ENCODE measurements at regions of chrX and their contacts with region 1.

Region 1: GRCh38 chrX:102835504-102836146 is 101.4 kb upstream of the RAB40AL start:
- DNase-seq: peak in 1 of 2 experiments; percentile 22
- H3K4me3 ChIP-seq: no peak overlapping the region
- H3K4me3 Mint-ChIP-seq: no peak overlapping the region
- H3K27ac Mint-ChIP-seq: no peak overlapping the region
- H3K4me1 ChIP-seq: no peaks in the 10 kb centered on the region
- H3K4me1 Mint-ChIP-seq: peaks cover 7% of the 10 kb centered on the region
- H3K27me3 ChIP-seq: no peaks in the 10 kb centered on the region
- H3K27me3 Mint-ChIP-seq: no peaks in the 10 kb centered on the region
- CTCF ChIP-seq: peak; percentile 44 to 55

Region 2: DNA sequence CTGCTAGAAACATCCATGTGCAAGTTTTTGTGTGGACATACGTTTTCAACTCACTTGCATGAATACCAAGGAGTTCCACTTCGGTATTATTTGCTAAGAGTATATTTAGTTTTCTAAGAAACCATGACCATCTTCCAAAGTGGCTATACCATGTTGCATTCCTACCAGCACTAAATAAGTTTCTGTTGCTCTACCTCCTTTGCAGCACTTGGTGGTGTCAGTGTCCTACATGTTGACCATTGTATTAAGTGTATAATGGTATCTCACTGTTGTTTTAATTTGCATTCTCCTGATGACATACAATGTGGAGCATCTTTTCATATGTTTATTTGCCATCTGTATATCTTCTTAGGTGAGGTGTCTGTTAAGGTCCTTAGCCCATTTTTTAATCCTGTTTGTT is 192.3 kb before region 1 on chrX:
- CTCF ChIA-PET with region 1: no interaction called
- POLR2A ChIA-PET with region 1: no interaction called
- intact Hi-C with region 1: loop called (anchors 1 kb)
- DNase-seq: no peak
- H3K4me3 ChIP-seq: no peak overlapping the region
- H3K4me3 Mint-ChIP-seq: no peak overlapping the region
- H3K27ac Mint-ChIP-seq: no peak overlapping the region
- H3K4me1 ChIP-seq: no peaks in the 10 kb centered on the region
- H3K4me1 Mint-ChIP-seq: no peaks in the 10 kb centered on the region
- H3K27me3 ChIP-seq: no peaks in the 10 kb centered on the region
- H3K27me3 Mint-ChIP-seq: no peaks in the 10 kb centered on the region
- CTCF ChIP-seq: no peak

Region 3: GRCh38 chrX:102712952-102713625 is 122.5 kb before region 1 on chrX:
- CTCF ChIA-PET with region 1: no interaction called
- POLR2A ChIA-PET with region 1: no interaction called
- intact Hi-C with region 1: loop called (anchors 1 kb)
- DNase-seq: peak; percentile 25 to 37
- H3K4me3 ChIP-seq: peak overlapping the region; percentile 40
- H3K4me3 Mint-ChIP-seq: peak overlapping the region; percentile 82
- H3K27ac Mint-ChIP-seq: no peak overlapping the region
- H3K4me1 ChIP-seq: no peaks in the 10 kb centered on the region
- H3K4me1 Mint-ChIP-seq: no peaks in the 10 kb centered on the region
- H3K27me3 ChIP-seq: no peaks in the 10 kb centered on the region
- H3K27me3 Mint-ChIP-seq: no peaks in the 10 kb centered on the region
- CTCF ChIP-seq: peak; percentile 38 to 46

Measured in Caco-2 (cell line).